Activated naive CD8-positive, alpha-beta T cell treated with anti-CD3 and anti-CD28 coated beads, Interleukin-2, amount 10 ng/mL, durations not matched to agents 7 days and 5 days (primary cell): ENCODE measurements at regions of chr22 and their contacts with region 1.

Region 1: DNA sequence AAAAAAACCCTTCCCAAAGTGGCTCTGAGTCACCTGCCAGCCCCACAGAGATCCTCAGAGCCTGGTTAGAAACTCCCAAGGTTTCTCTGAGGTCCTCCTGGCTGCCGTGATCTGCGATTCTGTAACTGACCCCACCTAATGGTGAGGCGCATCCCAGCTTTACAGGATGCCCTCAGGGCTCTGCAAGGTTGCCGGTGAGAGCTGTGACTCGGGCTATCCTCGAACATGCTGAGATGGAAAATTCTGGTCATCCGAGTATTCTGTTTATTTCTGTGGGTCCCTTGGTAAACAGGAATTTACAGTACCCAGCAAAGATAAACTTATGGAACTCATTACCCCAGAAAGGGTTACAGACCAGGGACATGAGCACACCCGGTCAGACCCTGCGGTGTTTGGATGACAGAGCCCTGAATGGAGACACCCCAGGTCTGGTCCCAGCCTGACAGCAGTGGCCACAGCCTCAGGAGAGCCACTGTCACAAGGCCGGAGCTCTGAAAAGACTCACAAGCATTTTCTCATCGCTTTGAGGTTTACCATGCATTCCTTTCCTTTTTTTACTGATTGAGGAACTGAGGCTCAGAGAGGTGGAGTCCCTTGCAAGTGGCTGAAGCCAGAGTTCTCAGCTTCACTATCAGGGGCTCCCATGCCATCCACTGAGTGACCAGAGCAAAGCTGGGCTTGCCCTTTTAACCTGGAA is 22.2 kb downstream of the LIF start:
- DNase-seq: no peak
- ATAC-seq: no peak
- H3K4me3 Mint-ChIP-seq: peak overlapping the region; percentile 23
- H3K27ac Mint-ChIP-seq: peak overlapping the region; percentile 97
- H3K4me1 Mint-ChIP-seq: peaks cover 91% of the 10 kb centered on the region
- H3K27me3 Mint-ChIP-seq: no peaks in the 10 kb centered on the region

Region 2: DNA sequence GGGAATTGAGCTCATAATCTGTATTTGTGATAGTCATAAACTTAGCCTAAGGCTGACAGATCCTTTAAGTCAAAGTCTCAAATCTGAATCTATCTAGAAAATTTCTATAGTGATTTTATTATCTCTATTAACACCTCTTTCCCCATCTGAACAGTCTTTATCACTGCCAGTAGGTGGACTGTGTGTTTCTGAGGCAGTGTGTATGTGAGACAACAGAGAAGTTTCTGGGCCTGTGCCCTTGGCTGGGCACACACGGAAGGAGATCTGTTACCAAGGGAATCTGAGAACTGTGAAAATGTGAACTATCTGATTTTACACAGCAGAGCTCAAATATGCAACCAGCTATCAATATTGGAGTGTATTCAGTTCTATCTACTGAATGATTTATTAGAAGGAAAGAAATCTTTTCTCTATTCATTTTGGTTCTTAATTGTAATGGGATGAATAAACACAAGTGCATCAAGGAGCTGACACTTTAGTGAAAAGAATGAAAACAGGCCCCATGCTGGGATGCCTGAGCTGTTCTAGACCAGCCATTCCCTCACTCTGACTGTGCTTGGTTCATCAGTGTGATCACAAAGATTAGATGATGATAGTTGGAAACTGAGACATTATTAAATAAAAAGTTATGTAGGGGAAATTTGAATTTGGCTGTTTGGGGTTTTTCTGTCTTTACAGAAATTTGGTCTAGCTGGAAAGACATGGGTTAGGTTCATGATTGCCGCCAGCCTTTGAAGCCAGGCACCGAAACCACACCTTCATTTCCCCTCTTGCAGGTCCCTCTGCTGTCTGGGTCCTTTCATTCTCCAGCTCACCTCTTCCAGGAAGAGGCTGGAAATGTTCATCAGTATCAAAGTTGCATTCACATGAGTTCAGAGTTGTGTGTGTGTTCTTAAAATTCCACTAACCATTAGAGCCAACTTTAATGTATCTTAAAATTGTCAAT is 45.9 kb before region 1 on chr22:
- POLR2A ChIA-PET with region 1: interaction called, 40 read pairs
- DNase-seq: peak; percentile 48
- ATAC-seq: peak; percentile 74
- H3K4me3 Mint-ChIP-seq: peak overlapping the region; percentile 61
- H3K27ac Mint-ChIP-seq: peak overlapping the region; percentile 93
- H3K4me1 Mint-ChIP-seq: peaks cover 78% of the 10 kb centered on the region
- H3K27me3 Mint-ChIP-seq: no peaks in the 10 kb centered on the region

Region 3: GRCh38 chr22:30183861-30184278 is 40.4 kb before region 1 on chr22:
- POLR2A ChIA-PET with region 1: interaction called, 41 read pairs
- DNase-seq: no peak
- ATAC-seq: peak; percentile 79
- H3K4me3 Mint-ChIP-seq: peak overlapping the region; percentile 64
- H3K27ac Mint-ChIP-seq: peak overlapping the region; percentile 95
- H3K4me1 Mint-ChIP-seq: peaks cover 84% of the 10 kb centered on the region
- H3K27me3 Mint-ChIP-seq: no peaks in the 10 kb centered on the region

Region 4: GRCh38 chr22:30309951-30310741 is 85.8 kb after region 1 on chr22:
- POLR2A ChIA-PET with region 1: no interaction called
- DNase-seq: no peak
- ATAC-seq: peak; percentile 49
- H3K4me3 Mint-ChIP-seq: peak overlapping the region; percentile 76
- H3K27ac Mint-ChIP-seq: peak overlapping the region; percentile 88
- H3K4me1 Mint-ChIP-seq: peaks cover 78% of the 10 kb centered on the region
- H3K27me3 Mint-ChIP-seq: no peaks in the 10 kb centered on the region